ENCODE measurements at regions of chr14 and their contacts with region 1.

Region 1: GRCh38 chr14:94689218-94689984 is 77.2 kb downstream of the SERPINA3 start:
- DNase-seq: peak; percentile 78
- ATAC-seq: peak; percentile 80
- H3K4me3 Mint-ChIP-seq: no peak overlapping the region
- H3K27ac Mint-ChIP-seq: no peak overlapping the region
- H3K4me1 Mint-ChIP-seq: no peaks in the 10 kb centered on the region
- H3K27me3 Mint-ChIP-seq: peaks cover 11% of the 10 kb centered on the region

Region 2: GRCh38 chr14:94098326-94098992 is 590.9 kb before region 1 on chr14:
- CTCF ChIA-PET with region 1: no interaction called
- POLR2A ChIA-PET with region 1: no interaction called
- intact Hi-C with region 1: no loop called
- DNase-seq: no peak
- ATAC-seq: no peak
- H3K4me3 Mint-ChIP-seq: no peak overlapping the region
- H3K27ac Mint-ChIP-seq: no peak overlapping the region
- H3K4me1 Mint-ChIP-seq: no peaks in the 10 kb centered on the region
- H3K27me3 Mint-ChIP-seq: no peaks in the 10 kb centered on the region

Region 3: GRCh38 chr14:94748667-94749347 is 59.4 kb after region 1 on chr14:
- CTCF ChIA-PET with region 1: no interaction called
- POLR2A ChIA-PET with region 1: no interaction called
- intact Hi-C with region 1: loop called in 1 of 2 experiments (anchors 1 kb)
- DNase-seq: peak; percentile 60
- ATAC-seq: no peak
- H3K4me3 Mint-ChIP-seq: no peak overlapping the region
- H3K27ac Mint-ChIP-seq: no peak overlapping the region
- H3K4me1 Mint-ChIP-seq: no peaks in the 10 kb centered on the region
- H3K27me3 Mint-ChIP-seq: peaks cover 9% of the 10 kb centered on the region

Region 4: DNA sequence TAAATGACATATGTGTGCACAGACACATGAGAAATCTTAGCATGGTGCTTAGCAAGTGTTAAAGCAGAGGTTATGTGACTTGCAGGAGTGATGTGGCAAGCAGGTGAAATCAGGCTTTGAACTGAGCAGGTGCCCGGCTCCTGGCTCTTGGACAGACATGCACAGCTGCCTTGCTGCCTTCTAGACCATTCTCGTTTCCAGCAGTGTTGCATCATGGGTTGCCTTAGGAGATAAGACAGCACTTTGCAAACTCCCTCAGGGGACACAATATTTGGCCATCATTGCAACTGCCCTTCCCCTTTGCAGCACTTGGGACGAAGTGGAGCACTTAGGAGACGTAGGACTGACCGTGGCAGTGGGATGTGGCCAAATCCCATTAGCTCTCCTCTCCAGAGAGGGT is 97.7 kb after region 1 on chr14:
- CTCF ChIA-PET with region 1: no interaction called
- POLR2A ChIA-PET with region 1: no interaction called
- intact Hi-C with region 1: no loop called
- DNase-seq: no peak
- ATAC-seq: no peak
- H3K4me3 Mint-ChIP-seq: no peak overlapping the region
- H3K27ac Mint-ChIP-seq: no peak overlapping the region
- H3K4me1 Mint-ChIP-seq: no peaks in the 10 kb centered on the region
- H3K27me3 Mint-ChIP-seq: peaks cover 9% of the 10 kb centered on the region

Region 5: DNA sequence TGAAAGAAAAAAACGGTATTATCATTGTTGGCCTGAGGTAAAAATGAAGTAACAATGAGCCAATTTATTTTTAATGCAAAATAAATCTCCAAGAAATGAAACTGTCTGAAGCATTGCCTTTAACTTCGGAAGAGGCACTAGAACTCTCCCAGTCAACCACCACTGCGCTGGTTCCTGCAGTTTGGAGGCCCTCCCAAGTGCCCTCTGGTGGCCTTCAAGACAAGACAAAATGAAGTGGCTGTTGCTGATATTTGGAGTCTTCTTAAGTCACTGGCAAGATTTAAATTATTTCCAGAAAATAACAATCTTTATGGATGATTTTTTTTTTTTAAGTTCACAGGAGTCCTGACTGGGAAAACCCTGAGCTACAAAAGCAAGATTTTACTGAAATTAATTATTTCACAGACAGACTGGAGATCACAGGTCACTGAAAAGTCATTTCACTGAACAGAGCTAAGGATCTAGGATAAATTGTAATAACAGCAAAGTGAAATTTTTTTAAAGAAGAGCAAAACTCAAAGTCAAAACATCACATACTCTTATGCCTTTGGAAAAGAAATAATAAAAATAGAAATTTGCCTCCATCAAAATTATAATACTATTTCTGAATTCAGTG is 409.7 kb after region 1 on chr14:
- CTCF ChIA-PET with region 1: no interaction called
- POLR2A ChIA-PET with region 1: no interaction called
- intact Hi-C with region 1: loop called (anchors 1 to 5 kb)
- DNase-seq: peak; percentile 59
- ATAC-seq: peak; percentile 49
- H3K4me3 Mint-ChIP-seq: no peak overlapping the region
- H3K27ac Mint-ChIP-seq: no peak overlapping the region
- H3K4me1 Mint-ChIP-seq: peaks cover 14% of the 10 kb centered on the region
- H3K27me3 Mint-ChIP-seq: no peaks in the 10 kb centered on the region

Region 6: DNA sequence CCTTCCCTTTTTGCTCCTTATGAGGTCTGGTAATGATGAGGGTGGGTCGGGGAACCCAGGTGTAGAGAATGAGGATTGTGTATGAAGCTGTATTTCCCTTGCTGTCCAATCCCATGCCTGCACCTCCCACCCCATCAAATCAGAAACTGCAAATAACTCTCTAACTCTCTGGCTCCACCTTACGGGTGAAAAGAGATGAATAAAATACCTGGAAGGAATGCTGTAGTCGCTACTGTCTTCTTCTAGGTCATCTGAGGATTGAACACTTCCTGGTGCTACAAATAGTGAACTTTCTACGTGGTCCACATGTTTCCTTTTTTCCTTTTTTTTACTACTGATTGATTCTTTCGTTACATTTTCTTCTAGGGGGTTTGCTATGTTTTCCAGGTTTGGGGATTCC is 506.9 kb after region 1 on chr14:
- CTCF ChIA-PET with region 1: no interaction called
- POLR2A ChIA-PET with region 1: no interaction called
- intact Hi-C with region 1: loop called (anchors 1 to 10 kb)
- DNase-seq: peak; percentile 14
- ATAC-seq: peak; percentile 78
- H3K4me3 Mint-ChIP-seq: no peak overlapping the region
- H3K27ac Mint-ChIP-seq: no peak overlapping the region
- H3K4me1 Mint-ChIP-seq: peaks cover 2% of the 10 kb centered on the region
- H3K27me3 Mint-ChIP-seq: peaks cover 2% of the 10 kb centered on the region

Region 7: DNA sequence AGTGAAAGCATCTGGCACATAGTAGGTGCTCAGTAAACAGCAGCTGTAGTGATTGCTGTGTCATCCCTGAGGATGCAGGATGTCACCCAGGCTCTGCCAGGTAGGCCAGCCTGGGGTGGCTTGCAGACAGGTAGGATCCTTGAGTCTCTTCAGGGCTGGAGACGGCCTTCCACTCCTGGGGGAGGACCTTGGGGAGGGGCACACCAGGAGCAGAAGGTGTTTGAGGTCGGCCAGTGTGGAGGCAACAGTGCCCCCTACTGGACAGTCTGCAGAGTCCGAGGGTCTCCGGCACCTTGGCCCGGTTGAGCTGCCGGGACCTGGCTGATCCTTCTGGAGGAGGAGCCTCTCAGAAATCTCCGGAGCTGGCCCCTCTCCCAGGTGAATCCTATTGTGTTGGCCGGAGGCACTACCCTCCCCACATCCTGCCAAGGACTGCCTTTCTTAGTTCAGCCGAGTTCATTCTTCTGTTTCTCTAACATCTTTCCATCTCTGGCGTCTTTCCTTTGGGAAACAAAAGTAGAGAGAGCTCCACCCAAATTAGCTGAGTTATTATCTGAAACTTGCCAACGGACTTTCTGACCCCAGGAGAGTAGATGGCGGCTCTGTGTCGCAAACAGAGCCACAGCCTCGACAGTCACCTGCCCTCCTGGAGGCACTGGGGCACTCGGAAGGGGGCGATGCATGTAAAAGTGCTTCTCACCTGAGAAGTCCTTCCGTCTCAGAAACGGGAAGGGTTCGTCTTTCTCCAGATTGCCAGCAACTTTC is 672.2 kb after region 1 on chr14:
- CTCF ChIA-PET with region 1: no interaction called
- POLR2A ChIA-PET with region 1: no interaction called
- intact Hi-C with region 1: loop called in 1 of 2 experiments (anchors 1 kb)
- DNase-seq: peak; percentile 66
- ATAC-seq: peak; percentile 76
- H3K4me3 Mint-ChIP-seq: no peak overlapping the region
- H3K27ac Mint-ChIP-seq: no peak overlapping the region
- H3K4me1 Mint-ChIP-seq: no peaks in the 10 kb centered on the region
- H3K27me3 Mint-ChIP-seq: peaks cover 40% of the 10 kb centered on the region

Region 8: GRCh38 chr14:95431199-95432143 is 742.1 kb after region 1 on chr14:
- CTCF ChIA-PET with region 1: interaction called, 3 read pairs
- POLR2A ChIA-PET with region 1: no interaction called
- intact Hi-C with region 1: loop called in 1 of 2 experiments (anchors 5 kb)
- DNase-seq: peak; percentile 28
- ATAC-seq: peak; percentile 73
- H3K4me3 Mint-ChIP-seq: no peak overlapping the region
- H3K27ac Mint-ChIP-seq: no peak overlapping the region
- H3K4me1 Mint-ChIP-seq: no peaks in the 10 kb centered on the region
- H3K27me3 Mint-ChIP-seq: no peaks in the 10 kb centered on the region

Measured in activated CD4-positive, alpha-beta T cell treated with anti-CD3 and anti-CD28 coated beads for 36 hours (primary cell).